Activated T-helper 2 cell treated with anti-CD3 and anti-CD28 coated beads, Interferon-gamma antibody, Interleukin-2, Interleukin-4, amounts not matched to agents 10 μg/mL and 5 μg/mL and 100 μg/mL, durations not matched to agents 14 hours and 24 hours and 36 hours (primary cell): ENCODE measurements at regions of chr1 and their contacts with region 1.

Region 1: DNA sequence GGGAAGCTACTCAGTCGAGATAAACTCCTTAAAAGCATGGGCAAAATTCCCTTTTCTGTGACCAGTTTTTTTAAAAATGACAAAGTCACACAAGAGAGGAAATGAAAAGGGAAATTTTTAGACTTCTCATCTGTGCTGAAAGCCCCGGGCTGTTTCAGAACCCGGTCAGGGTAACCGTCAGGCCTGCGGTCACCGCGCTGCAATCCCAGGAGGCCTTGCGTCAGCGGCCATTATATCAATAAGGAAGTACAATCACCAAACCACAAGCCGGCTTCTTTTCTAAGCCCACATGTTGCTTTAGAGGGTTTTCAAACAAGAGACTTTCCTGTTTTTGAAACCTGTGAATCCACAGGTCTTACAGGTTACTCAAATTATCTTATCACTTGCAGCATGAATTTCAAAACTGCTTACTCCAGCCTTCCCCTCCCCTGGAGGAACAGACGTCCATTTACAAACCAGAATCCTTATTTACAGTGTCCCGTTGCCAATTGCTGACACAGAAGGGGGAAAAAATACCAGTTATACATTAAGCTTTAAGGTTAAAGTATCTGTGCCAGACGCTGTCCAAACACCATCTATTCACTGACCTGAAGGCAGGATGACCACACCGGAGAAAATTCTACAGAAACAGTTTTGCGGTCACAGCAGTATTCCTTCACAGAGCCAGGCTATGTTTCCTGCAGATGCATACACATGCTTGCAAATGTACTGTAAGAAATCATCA is 165.3 kb downstream of the TOMM20 start:
- DNase-seq: peak; percentile 87
- H3K4me3 Mint-ChIP-seq: peak overlapping the region; percentile 62
- H3K27ac Mint-ChIP-seq: peak overlapping the region; percentile 93
- H3K4me1 Mint-ChIP-seq: peaks cover 70% of the 10 kb centered on the region
- H3K27me3 Mint-ChIP-seq: no peaks in the 10 kb centered on the region

Region 2: GRCh38 chr1:234499119-234499942 is 464.0 kb before region 1 on chr1:
- intact Hi-C with region 1: loop called (anchors 1 kb)
- DNase-seq: peak; percentile 81
- H3K4me3 Mint-ChIP-seq: peak overlapping the region; percentile 11
- H3K27ac Mint-ChIP-seq: peak overlapping the region; percentile 93
- H3K4me1 Mint-ChIP-seq: peaks cover 80% of the 10 kb centered on the region
- H3K27me3 Mint-ChIP-seq: no peaks in the 10 kb centered on the region

Region 3: GRCh38 chr1:234722904-234723720 is 240.2 kb before region 1 on chr1:
- intact Hi-C with region 1: loop called (anchors 1 kb)
- DNase-seq: peak; percentile 26
- H3K4me3 Mint-ChIP-seq: peak overlapping the region; percentile 72
- H3K27ac Mint-ChIP-seq: peak overlapping the region; percentile 99
- H3K4me1 Mint-ChIP-seq: peaks cover 73% of the 10 kb centered on the region
- H3K27me3 Mint-ChIP-seq: no peaks in the 10 kb centered on the region

Region 4: GRCh38 chr1:234842726-234843641 is 120.4 kb before region 1 on chr1:
- intact Hi-C with region 1: loop called (anchors 1 kb)
- DNase-seq: peak; percentile 57
- H3K4me3 Mint-ChIP-seq: peak overlapping the region; percentile 77
- H3K27ac Mint-ChIP-seq: peak overlapping the region; percentile 90
- H3K4me1 Mint-ChIP-seq: peaks cover 93% of the 10 kb centered on the region
- H3K27me3 Mint-ChIP-seq: no peaks in the 10 kb centered on the region

Region 5: DNA sequence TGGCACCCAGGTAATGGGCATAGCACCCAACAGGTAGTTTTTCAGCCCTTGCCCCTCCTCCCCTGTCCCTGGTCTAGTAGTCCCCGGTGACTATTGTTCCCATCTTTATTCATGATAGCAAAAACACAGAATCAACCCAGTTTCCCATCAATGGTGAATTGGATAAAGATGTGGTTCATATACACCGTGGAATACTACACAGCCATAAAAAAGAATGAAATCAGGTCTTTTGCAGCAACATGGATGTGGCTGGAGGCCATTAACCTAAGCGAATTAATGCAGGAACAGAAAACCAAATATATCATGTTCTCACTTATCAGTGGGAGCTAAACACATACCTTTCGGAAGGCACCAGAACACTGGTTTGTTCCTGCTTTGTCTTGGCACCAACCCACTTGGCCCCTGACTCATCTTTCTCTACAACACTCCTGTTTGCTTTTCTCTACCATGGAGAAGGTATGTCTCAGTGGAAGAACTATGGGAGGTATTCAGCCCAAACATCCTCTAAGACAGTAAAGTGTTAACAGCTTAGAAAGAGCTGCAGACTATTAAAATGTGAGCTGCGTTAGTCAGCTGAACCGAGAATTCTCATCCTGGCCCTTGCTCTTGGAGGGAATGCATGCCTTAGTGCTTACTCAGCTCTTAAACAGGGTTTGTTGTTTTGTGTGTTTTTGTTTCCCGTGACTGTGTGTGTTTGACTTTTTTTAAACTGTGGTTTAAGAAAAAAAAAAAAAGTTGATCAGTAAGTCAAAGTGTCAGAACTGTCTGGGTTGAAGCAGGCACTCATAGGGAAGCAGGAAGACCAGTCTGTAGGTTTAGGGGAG is 37.7 kb before region 1 on chr1:
- intact Hi-C with region 1: loop called (anchors 1 kb)
- DNase-seq: no peak
- H3K4me3 Mint-ChIP-seq: peak overlapping the region; percentile 72
- H3K27ac Mint-ChIP-seq: peak overlapping the region; percentile 98
- H3K4me1 Mint-ChIP-seq: peaks cover 58% of the 10 kb centered on the region
- H3K27me3 Mint-ChIP-seq: no peaks in the 10 kb centered on the region

Region 6: DNA sequence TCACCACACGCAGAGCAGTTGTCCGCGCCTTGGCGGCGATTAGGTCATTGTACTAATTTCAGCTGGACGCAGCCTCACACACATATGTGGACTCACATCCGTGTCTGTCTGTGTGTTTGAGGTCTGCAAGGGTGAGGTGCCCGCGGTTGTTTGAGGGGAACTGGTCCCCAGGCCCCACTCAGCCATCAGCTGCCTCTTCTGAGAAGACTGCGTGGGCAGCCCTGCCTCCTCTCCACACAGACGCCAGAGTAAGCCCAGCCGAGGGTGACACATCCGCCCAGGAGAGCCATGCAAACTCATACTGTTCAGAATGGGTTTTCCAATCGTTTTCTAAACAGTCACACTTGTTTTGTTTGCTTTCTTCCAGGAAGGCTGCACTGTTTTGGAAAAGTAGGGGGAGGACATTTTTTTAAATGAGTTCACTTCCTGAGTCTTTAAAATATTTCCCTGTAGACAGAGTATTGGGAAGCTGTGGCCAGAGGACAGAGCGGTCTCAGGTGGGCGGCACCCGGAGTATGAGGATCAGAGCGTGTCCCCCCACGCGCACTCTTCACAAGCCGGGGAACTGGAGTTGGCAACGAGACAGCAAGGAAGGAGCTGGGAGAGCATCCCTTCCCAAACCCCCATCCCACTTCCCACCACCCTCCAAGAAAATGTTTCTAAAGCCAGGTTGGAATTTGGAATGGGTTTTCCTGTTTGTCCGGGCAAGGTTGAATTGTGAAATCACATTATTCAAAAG is 112.0 kb after region 1 on chr1:
- intact Hi-C with region 1: loop called (anchors 2 kb)
- DNase-seq: no peak
- H3K4me3 Mint-ChIP-seq: peak overlapping the region; percentile 56
- H3K27ac Mint-ChIP-seq: peak overlapping the region; percentile 99
- H3K4me1 Mint-ChIP-seq: peaks cover 34% of the 10 kb centered on the region
- H3K27me3 Mint-ChIP-seq: no peaks in the 10 kb centered on the region

Region 7: DNA sequence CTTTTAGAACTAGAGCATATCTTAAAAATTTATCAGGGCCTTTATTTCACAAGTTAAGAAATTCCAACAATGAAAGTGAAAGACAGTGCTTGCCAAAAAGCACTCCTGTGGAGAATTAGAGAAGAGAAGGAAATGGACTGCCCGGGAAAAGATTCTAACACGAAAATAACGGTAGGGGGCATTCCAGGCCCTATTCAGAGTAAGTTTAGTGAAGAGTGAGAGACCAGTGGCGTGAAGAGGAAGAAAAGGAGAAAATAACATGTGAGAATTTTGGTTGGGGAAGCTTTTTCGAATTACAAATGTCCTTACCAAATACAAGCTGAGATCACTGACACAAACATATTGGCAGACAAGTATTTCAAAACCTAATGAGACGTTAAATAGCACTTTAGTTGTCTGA is 236.1 kb after region 1 on chr1:
- intact Hi-C with region 1: no loop called
- DNase-seq: no peak
- H3K4me3 Mint-ChIP-seq: no peak overlapping the region
- H3K27ac Mint-ChIP-seq: no peak overlapping the region
- H3K4me1 Mint-ChIP-seq: peaks cover 3% of the 10 kb centered on the region
- H3K27me3 Mint-ChIP-seq: no peaks in the 10 kb centered on the region